Activated CD8-positive, alpha-beta memory T cell treated with anti-CD3 and anti-CD28 coated beads, Interleukin-2, amount 10 ng/mL, durations not matched to agents 7 days and 5 days (primary cell): ENCODE measurements at regions of chr15 and their contacts with region 1.

Region 1: DNA sequence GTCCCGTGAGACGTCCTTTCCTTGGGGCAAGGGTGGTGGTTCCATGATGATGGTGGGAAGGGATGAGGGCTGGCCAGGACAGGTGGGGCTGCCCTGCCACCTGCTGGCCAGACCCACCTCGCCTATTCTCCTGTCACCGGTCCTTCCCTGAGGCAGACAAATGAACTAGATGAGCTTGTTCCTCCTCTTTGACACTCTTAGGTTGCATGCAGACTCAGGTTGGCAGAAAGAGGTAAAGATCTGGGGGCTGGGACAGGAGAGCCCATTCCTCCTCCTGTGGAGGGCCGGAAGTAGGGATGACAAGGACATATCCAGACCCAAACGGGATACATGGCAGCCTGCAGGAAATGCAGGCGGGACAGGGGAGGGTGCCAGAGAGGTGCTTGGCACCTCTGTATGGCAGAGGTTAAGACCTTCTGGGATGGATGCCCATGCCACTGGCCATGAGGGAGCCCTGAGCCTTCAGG is 38.6 kb downstream of the ACSBG1 start:
- DNase-seq: peak; percentile 61
- ATAC-seq: peak; percentile 89
- H3K4me3 Mint-ChIP-seq: no peak overlapping the region
- H3K27ac Mint-ChIP-seq: no peak overlapping the region
- H3K4me1 Mint-ChIP-seq: no peaks in the 10 kb centered on the region
- H3K27me3 Mint-ChIP-seq: peaks cover 11% of the 10 kb centered on the region

Region 2: GRCh38 chr15:77959432-77959879 is 236.3 kb before region 1 on chr15:
- CTCF ChIA-PET with region 1: interaction called, 22 read pairs
- DNase-seq: peak; percentile 86
- ATAC-seq: peak; percentile 98
- H3K4me3 Mint-ChIP-seq: peak overlapping the region; percentile 63
- H3K27ac Mint-ChIP-seq: no peak overlapping the region
- H3K4me1 Mint-ChIP-seq: peaks cover 27% of the 10 kb centered on the region
- H3K27me3 Mint-ChIP-seq: peaks cover 52% of the 10 kb centered on the region

Region 3: DNA sequence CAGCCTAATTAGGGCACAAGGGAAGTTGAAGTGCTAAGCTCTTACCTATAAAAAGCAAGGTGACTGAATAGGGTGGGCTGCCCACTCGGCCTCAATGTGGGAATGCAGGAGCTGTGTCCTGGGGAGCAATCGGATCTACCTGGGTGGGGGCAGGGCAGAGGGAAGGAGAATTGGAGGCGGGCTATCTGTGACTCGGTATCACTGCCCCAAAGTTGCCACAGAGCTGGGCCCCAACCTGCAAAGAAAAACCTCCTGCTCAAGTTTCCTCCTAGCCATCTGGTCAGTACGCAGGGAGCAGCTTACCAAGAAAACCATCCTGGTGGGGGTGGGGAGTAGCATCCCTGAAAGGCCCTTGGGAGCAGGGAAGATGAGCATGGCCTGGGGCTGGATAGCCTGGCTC is 75.2 kb before region 1 on chr15:
- CTCF ChIA-PET with region 1: interaction called, 134 read pairs
- DNase-seq: no peak
- ATAC-seq: no peak
- H3K4me3 Mint-ChIP-seq: no peak overlapping the region
- H3K27ac Mint-ChIP-seq: no peak overlapping the region
- H3K4me1 Mint-ChIP-seq: peaks cover 3% of the 10 kb centered on the region
- H3K27me3 Mint-ChIP-seq: peaks cover 4% of the 10 kb centered on the region

Region 4: DNA sequence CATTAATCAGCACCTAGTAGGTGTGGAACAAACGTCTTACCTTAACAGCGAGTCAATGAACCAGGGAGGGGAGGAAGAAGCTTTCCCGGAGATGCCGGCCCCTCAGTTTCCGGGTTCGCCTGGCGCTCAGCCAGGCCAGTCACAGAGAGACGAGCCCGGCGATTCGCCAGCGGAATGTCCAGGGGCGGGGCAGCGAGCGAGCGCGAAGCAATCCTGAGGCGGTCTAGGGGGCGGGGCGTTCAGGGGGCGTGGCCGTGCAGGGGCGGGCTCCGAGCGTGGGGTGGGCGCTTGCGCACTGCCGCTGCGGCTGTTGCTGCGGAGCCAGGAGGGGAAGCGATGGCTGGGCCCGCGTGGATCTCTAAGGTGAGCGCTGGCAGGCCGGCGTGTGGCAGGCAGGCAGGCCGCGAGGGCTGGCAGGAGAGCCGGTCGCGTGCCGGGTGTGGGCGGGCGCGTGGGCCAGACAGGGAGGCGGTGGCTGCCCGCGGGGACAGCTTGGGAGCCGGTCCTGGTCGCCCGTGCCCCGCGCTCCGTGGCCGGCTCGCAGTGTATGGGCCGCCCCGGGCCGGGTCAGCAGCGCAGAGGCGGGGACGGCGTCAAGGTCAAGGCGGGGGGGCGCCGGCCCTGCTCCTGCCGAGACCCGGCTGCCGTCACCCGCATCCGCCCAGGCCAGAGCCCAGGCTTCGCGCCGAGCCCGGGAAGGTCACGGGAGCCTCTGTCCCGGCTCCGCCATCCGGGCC is 46.5 kb before region 1 on chr15 and contains the start of gene IDH3A:
- CTCF ChIA-PET with region 1: interaction called, 21 read pairs
- DNase-seq: peak; percentile 100
- ATAC-seq: peak; percentile 95
- H3K4me3 Mint-ChIP-seq: peak within 1 kb of the TSS; percentile 91
- H3K27ac Mint-ChIP-seq: peak within 1 kb of the TSS; percentile 90
- H3K4me1 Mint-ChIP-seq: peaks cover 45% of the 10 kb centered on the region
- H3K27me3 Mint-ChIP-seq: no peaks in the 10 kb centered on the region
- total RNA-seq, gene IDH3A: 97.9 to 105 TPM

Region 5: GRCh38 chr15:78182821-78183220 is 12.9 kb before region 1 on chr15:
- CTCF ChIA-PET with region 1: interaction called, 59 read pairs
- DNase-seq: peak; percentile 11
- ATAC-seq: no peak
- H3K4me3 Mint-ChIP-seq: no peak overlapping the region
- H3K27ac Mint-ChIP-seq: no peak overlapping the region
- H3K4me1 Mint-ChIP-seq: no peaks in the 10 kb centered on the region
- H3K27me3 Mint-ChIP-seq: peaks cover 12% of the 10 kb centered on the region

Region 6: DNA sequence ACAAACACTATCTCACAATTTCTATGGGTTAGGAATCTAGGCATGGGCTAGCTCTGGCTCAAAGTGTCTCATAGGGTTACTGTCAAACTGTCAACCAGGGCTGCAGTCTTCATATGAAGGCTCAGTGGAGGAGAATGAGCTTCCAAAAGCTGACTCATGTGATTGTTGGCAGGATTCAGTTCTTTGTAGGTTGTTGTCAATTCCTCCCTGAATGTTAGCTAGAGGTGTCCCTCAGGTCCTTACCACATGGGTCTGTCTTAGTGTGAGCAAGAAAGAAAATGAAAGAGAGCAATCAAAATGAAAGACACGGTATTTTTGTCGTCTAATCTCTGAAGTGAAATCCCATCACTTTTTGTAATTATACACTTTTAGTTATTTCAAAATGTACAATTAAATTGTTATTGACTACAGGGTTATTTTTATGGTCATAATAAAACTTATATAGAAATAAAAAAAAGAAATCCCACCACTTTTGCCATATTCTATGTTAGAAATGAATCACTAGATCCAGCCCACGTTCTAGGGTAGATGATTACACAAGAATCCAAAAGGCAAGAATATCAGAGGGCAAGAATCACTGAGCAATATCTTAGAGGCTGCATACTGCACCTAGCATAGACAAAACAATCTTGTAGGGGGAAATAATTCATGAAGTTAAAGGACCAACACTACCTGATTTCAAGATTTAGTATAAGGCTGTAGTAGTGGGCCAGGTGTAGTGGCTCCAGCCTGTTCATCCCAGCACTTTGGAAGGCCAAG is 30.2 kb after region 1 on chr15:
- CTCF ChIA-PET with region 1: interaction called, 16 read pairs
- DNase-seq: peak; percentile 46
- ATAC-seq: peak; percentile 92
- H3K4me3 Mint-ChIP-seq: peak overlapping the region; percentile 59
- H3K27ac Mint-ChIP-seq: peak overlapping the region; percentile 50
- H3K4me1 Mint-ChIP-seq: peaks cover 27% of the 10 kb centered on the region
- H3K27me3 Mint-ChIP-seq: peaks cover 5% of the 10 kb centered on the region

Region 7: GRCh38 chr15:78257681-78258080 is 61.9 kb after region 1 on chr15:
- CTCF ChIA-PET with region 1: interaction called, 10 read pairs
- DNase-seq: no peak
- ATAC-seq: no peak
- H3K4me3 Mint-ChIP-seq: no peak overlapping the region
- H3K27ac Mint-ChIP-seq: no peak overlapping the region
- H3K4me1 Mint-ChIP-seq: peaks cover 3% of the 10 kb centered on the region
- H3K27me3 Mint-ChIP-seq: no peaks in the 10 kb centered on the region

Region 8: DNA sequence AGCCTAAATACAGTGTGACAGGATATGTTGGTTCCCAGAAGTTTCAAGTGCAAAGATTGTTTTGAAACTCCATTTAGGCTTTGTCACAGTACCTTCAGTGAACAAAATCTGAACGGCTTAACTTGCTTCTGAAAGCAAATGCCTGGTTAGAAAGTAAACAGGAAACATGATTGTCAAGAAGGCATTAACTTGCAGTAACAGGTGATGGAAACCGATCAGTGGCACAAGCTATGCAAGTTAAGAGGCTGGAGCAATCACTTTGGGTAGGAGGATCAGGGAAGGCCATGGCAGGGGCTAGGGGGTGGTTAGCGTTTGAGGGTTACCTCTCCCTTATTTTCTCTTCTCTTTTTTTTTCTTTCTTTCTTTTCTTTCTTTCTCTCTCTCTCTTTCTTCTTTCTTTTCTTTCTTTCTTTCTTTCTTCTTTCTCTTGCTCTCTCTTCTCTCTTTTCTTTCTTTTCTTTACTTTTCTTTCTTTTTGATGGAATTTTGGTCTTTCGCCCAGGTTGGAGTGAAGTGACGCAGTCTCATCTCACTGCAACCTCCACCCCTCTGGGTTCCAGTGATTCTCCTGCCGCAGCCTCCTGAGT is 314.1 kb after region 1 on chr15:
- CTCF ChIA-PET with region 1: no interaction called
- DNase-seq: no peak
- ATAC-seq: no peak
- H3K4me3 Mint-ChIP-seq: no peak overlapping the region
- H3K27ac Mint-ChIP-seq: no peak overlapping the region
- H3K4me1 Mint-ChIP-seq: peaks cover 22% of the 10 kb centered on the region
- H3K27me3 Mint-ChIP-seq: peaks cover 6% of the 10 kb centered on the region